Heart right ventricle (tissue), 16 donors: ENCODE measurements at regions of chr5 and their contacts with region 1.

Region 1: DNA sequence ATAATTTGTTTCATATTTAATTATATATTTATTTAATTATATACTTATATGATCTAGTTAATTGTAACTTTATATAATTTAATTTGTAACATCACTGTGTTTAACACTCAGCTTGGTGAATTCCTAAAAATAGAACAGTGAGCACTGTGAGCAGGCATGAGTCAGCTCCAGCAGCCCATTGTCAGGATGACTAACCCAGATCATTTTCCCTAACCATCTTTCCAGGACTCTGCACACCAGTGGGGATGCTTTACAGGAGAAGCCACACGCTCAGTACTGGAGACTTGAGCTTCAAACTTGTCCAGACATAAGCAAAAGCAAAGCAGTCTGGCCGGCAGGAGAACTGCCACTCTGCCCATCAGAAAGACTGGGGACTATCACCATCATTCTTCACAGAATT is 446.2 kb upstream of the TRPC7 start:
- DNase-seq: no peak
- ATAC-seq: peak in 2 of 8 donors; percentile 41 to 83
- H3K4me3 ChIP-seq: no peak overlapping the region
- H3K27ac ChIP-seq: peak overlapping the region in 1 of 10 donors; percentile 4
- H3K4me1 ChIP-seq: peaks cover 0 to 32% (median 23%) of the 10 kb centered on the region in 9 donors
- H3K27me3 ChIP-seq: no peaks in the 10 kb centered on the region
- CTCF ChIP-seq: no peak

Region 2: DNA sequence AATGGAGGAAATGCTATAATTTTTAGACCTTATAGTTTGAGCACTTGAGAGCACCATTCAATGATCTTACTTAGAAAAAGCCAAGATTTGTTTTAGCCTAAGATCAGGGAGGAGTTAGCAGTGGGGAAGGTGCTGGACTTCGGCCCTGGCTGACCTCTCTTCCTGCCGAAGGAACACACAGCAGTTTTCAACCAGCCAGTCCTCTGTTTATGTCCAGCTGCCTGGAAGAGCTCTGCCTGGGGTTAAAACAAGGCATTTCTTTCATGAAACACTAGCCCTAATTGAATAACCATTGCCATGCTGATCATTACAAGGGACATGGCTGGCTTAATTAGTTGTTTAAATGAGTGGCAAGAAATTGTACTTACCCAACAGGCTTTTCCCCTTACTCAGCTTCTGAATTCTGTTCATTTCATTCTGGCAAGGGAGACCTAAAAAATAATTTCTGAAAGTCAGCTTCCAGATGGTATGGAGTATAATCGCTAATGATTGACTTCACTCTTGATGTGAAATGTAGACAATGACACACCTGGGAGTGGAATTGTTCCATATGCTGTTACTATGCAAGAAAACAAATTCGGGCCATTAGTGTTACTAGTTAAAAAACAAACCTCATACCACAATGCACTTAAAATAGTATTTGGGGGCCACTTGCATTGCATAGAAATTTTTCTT is 173.4 kb after region 1 on chr5:
- intact Hi-C with region 1: loop called in 2 of 10 experiments (anchors 10 kb)
- DNase-seq: no peak
- ATAC-seq: peak in 7 of 8 donors; percentile 27 to 78 (median 53)
- H3K4me3 ChIP-seq: no peak overlapping the region
- H3K27ac ChIP-seq: peak overlapping the region in 5 of 10 donors; percentile 20 to 64 (median 36)
- H3K4me1 ChIP-seq: peaks cover 0 to 23% (median 18%) of the 10 kb centered on the region in 9 donors
- H3K27me3 ChIP-seq: no peaks in the 10 kb centered on the region
- CTCF ChIP-seq: no peak

Region 3: DNA sequence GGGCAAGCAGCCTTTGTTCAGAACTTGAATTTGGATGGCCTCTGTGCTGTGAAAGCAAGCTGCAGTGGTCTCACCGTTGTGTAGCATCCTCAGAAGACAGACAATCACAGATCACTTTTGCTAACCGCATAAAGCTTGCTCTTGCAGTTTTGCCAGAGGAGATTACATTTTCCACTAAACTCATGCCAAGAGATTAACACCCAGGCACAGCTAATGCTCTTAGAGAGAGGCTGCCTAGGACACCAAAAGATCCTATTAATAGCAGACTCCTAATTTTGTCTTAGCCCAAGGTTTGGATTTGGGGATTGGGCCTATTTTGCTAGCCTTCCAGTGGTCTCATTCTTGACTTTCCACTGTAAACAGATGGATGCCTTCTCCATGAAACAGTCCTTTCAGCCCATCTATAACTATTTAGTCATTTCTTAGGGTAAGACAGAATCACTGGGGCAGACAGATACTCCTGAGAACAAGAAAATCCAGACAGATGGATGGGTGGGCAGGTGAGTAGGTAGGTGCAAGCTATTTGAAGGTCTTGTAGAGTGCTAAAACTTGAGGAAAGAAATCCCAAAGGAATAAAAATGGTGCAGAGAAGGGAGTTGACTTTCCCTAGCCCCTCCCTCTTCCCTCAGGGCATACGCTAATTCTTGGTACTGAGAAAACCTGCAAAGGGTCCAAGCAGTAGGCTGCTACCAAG is 181.4 kb after region 1 on chr5:
- intact Hi-C with region 1: loop called in 2 of 10 experiments (anchors 10 kb)
- DNase-seq: peak in 1 of 2 donors; percentile 34
- ATAC-seq: peak; percentile 57 to 96 (median 88)
- H3K4me3 ChIP-seq: no peak overlapping the region
- H3K27ac ChIP-seq: peak overlapping the region in 8 of 10 donors; percentile 53 to 83 (median 71)
- H3K4me1 ChIP-seq: peaks cover 0 to 41% (median 17%) of the 10 kb centered on the region in 9 donors
- H3K27me3 ChIP-seq: no peaks in the 10 kb centered on the region
- CTCF ChIP-seq: no peak

Region 4: GRCh38 chr5:137086342-137086741 is 274.8 kb after region 1 on chr5:
- intact Hi-C with region 1: no loop called
- DNase-seq: no peak
- ATAC-seq: no peak
- H3K4me3 ChIP-seq: no peak overlapping the region
- H3K27ac ChIP-seq: no peak overlapping the region
- H3K4me1 ChIP-seq: peaks cover 0 to 4% (median 0%) of the 10 kb centered on the region in 9 donors
- H3K27me3 ChIP-seq: no peaks in the 10 kb centered on the region
- CTCF ChIP-seq: no peak

Region 5: DNA sequence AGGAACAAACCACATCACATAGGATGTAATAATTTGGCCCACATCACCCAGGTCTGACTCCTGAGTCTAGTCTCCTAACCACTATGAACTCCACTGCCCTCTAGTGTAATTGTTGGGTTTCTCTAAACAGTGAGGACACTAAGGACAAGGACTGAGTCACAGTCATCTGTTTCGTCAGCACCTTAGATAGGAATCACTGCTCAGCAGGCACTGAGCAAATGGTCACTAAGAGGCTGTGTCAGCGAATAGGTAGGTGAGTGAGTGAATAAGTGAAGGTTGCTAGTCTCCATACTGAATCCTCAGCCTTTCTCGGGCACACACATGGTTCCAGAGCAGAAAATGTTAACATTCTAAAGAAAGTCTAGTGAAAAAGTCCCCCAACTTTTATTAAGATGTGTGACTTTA is 409.0 kb after region 1 on chr5:
- intact Hi-C with region 1: loop called in 2 of 10 experiments (anchors 5 to 10 kb)
- DNase-seq: no peak
- ATAC-seq: peak in 6 of 8 donors; percentile 46 to 90 (median 66)
- H3K4me3 ChIP-seq: no peak overlapping the region
- H3K27ac ChIP-seq: no peak overlapping the region
- H3K4me1 ChIP-seq: peaks cover 0 to 16% (median 0%) of the 10 kb centered on the region in 9 donors
- H3K27me3 ChIP-seq: no peaks in the 10 kb centered on the region
- CTCF ChIP-seq: peak in 8 of 9 donors; percentile 12 to 64 (median 52)